Endothelial cell of umbilical vein (primary cell): ENCODE measurements at regions of chr12 and their contacts with region 1.

Region 1: DNA sequence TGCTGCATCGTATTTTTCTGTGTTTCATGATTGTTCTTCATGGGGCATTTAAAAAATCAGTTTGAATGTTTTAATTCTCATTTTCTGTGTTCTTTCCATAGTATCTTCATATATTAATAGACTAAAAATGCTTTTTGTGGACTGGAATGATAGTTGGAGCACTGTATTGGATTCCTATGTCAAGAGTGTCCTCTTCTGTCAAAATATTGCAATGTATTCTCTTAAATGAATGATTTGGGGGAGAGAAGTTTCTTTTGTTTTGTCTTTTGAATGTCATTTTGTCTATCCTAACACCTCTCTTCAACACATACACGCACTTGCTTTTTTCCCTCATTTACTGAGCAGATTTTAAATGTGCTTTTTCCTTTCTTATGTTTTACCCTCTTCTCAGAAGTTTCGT is 4.7 kb upstream of the EIF2S3B start:
- DNase-seq: peak; percentile 4
- H3K4me3 ChIP-seq: no peak overlapping the region
- H3K27ac ChIP-seq: no peak overlapping the region
- H3K4me1 ChIP-seq: no peaks in the 10 kb centered on the region
- H3K27me3 ChIP-seq: no peaks in the 10 kb centered on the region
- CTCF ChIP-seq: no peak
- POLR2A ChIP-seq: no peak

Region 2: GRCh38 chr12:10364815-10365622 is 136.0 kb before region 1 on chr12:
- CTCF ChIA-PET with region 1: no interaction called
- POLR2A ChIA-PET with region 1: no interaction called
- dilution Hi-C with region 1: no loop called
- intact Hi-C with region 1: no loop called
- DNase-seq: peak; percentile 82
- H3K4me3 ChIP-seq: peak overlapping the region; percentile 62 to 93 (median 78)
- H3K27ac ChIP-seq: peak overlapping the region; percentile 77
- H3K4me1 ChIP-seq: peaks cover 26% of the 10 kb centered on the region
- H3K27me3 ChIP-seq: no peaks in the 10 kb centered on the region
- CTCF ChIP-seq: no peak
- POLR2A ChIP-seq: no peak

Region 3: GRCh38 chr12:10385166-10385613 is 115.8 kb before region 1 on chr12:
- CTCF ChIA-PET with region 1: no interaction called
- POLR2A ChIA-PET with region 1: no interaction called
- dilution Hi-C with region 1: no loop called
- intact Hi-C with region 1: loop called (anchors 5 kb)
- DNase-seq: no peak
- H3K4me3 ChIP-seq: no peak overlapping the region
- H3K27ac ChIP-seq: no peak overlapping the region
- H3K4me1 ChIP-seq: no peaks in the 10 kb centered on the region
- H3K27me3 ChIP-seq: no peaks in the 10 kb centered on the region
- CTCF ChIP-seq: no peak
- POLR2A ChIP-seq: no peak